CD8-positive, alpha-beta T cell (primary cell): ENCODE measurements at regions of chr1 and their contacts with region 1.

Region 1: DNA sequence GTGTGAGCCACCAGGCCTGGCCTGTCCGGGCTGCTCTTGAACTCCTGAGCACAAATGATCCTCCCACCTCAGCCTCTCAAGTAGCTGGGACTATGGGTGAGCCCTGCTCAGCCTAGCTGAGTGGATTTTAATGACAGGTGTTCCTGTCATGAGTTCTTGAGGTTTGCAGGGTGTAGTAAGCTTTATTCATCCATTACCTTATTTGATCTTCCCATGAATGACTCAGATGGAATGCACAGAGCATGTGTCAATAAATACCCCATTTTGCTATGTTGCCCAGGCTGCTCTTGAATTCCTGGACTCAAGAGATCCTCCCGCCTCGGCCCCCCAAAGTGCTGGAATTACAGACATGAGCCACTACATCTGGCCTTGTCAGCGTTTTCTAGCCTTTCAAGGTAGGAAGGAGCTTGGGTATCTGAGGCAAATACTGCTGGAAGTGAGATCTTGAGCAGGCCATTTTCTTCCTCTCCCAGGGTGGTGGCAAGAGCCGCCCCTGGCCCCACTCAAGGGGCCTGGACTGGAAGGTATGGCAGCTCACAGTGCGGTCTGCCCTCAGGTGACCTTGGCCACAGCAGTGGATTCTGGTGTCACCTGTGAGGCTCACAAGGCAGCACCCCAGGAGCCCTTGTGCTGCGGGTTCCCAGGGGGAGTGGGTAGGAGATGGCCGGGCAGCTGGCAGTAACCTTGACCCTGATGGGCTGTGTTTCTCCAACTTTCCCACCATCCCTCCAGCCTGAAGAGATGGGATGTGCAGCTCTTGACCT is 20.0 kb downstream of the PIK3CD start:
- DNase-seq: peak in 1 of 9 experiments; percentile 29
- ATAC-seq: peak; percentile 76
- H3K4me3 ChIP-seq: no peak overlapping the region
- H3K4me3 Mint-ChIP-seq: no peak overlapping the region
- H3K27ac ChIP-seq: peak overlapping the region in 1 of 2 experiments; percentile 39
- H3K27ac Mint-ChIP-seq: peak overlapping the region; percentile 87
- H3K4me1 ChIP-seq: peaks cover 82% of the 10 kb centered on the region
- H3K4me1 Mint-ChIP-seq: peaks cover 71% of the 10 kb centered on the region
- H3K27me3 ChIP-seq: no peaks in the 10 kb centered on the region
- H3K27me3 Mint-ChIP-seq: no peaks in the 10 kb centered on the region
- CTCF ChIP-seq: no peak

Region 2: DNA sequence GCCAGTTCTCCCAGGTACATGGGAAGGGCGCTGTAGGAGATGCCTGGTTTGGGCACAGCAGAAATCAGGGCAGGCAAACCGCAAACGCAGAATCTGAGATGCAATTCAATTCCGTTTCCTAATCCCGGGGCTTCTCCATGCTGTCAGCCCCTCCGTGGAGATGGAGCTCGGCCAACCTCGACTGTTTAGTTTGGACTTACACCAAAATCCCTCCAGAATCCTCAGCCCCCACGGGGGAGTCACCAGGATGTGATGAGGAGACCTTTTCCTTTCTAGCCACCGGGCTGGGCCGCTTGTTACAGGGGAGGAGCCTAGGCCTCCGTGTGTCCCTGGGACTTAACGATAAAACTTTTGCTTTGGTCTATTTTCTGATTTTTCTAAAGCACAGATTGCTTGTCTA is 653.2 kb before region 1 on chr1:
- CTCF ChIA-PET with region 1: no interaction called
- POLR2A ChIA-PET with region 1: no interaction called
- intact Hi-C with region 1: no loop called
- DNase-seq: no peak
- ATAC-seq: no peak
- H3K4me3 ChIP-seq: no peak overlapping the region
- H3K4me3 Mint-ChIP-seq: no peak overlapping the region
- H3K27ac ChIP-seq: no peak overlapping the region
- H3K27ac Mint-ChIP-seq: no peak overlapping the region
- H3K4me1 ChIP-seq: no peaks in the 10 kb centered on the region
- H3K4me1 Mint-ChIP-seq: peaks cover 1% of the 10 kb centered on the region
- H3K27me3 ChIP-seq: peaks cover 0 to 3% of the 10 kb centered on the region in 2 experiments
- H3K27me3 Mint-ChIP-seq: peaks cover 3% of the 10 kb centered on the region
- CTCF ChIP-seq: no peak

Region 3: GRCh38 chr1:9657521-9658032 is 14.0 kb before region 1 on chr1:
- CTCF ChIA-PET with region 1: interaction called, 4 read pairs
- POLR2A ChIA-PET with region 1: interaction called, 16 read pairs
- intact Hi-C with region 1: loop called in 1 of 2 experiments (anchors 2 kb)
- DNase-seq: peak in 1 of 9 experiments; percentile 39
- ATAC-seq: no peak
- H3K4me3 ChIP-seq: peak overlapping the region in 1 of 2 experiments; percentile 17
- H3K4me3 Mint-ChIP-seq: peak overlapping the region; percentile 51
- H3K27ac ChIP-seq: peak overlapping the region in 1 of 2 experiments; percentile 48
- H3K27ac Mint-ChIP-seq: peak overlapping the region; percentile 98
- H3K4me1 ChIP-seq: peaks cover 59% of the 10 kb centered on the region
- H3K4me1 Mint-ChIP-seq: peaks cover 78% of the 10 kb centered on the region
- H3K27me3 ChIP-seq: no peaks in the 10 kb centered on the region
- H3K27me3 Mint-ChIP-seq: no peaks in the 10 kb centered on the region
- CTCF ChIP-seq: no peak